IMR-90 (cell line): ENCODE measurements at regions of chr12 and their contacts with region 1.

Region 1: GRCh38 chr12:38316391-38317129 is at the start of gene ALG10B:
- DNase-seq: peak; percentile 96
- ATAC-seq: peak; percentile 100
- H3K4me3 ChIP-seq: peak within 1 kb of the TSS; percentile 77
- H3K27ac ChIP-seq: peak within 1 kb of the TSS; percentile 62
- H3K4me1 ChIP-seq: no peaks in the 10 kb centered on the region
- H3K27me3 ChIP-seq: no peaks in the 10 kb centered on the region
- CTCF ChIP-seq: peak; percentile 76
- POLR2A ChIP-seq: peak; percentile 64; the same call in 1 of the 2 replicates
- RAD21 ChIP-seq: peak; percentile 74
- total RNA-seq, gene ALG10B: 2.5 and 2.9 TPM in 2 replicates

Region 2: GRCh38 chr12:37672655-37673260 is 643.8 kb before region 1 on chr12:
- CTCF ChIA-PET with region 1: no interaction called
- POLR2A ChIA-PET with region 1: no interaction called
- dilution Hi-C with region 1: no loop called
- in situ Hi-C with region 1: no loop called
- intact Hi-C with region 1: loop called (anchors 10 kb)
- DNase-seq: no peak
- ATAC-seq: no peak
- H3K4me3 ChIP-seq: no peak overlapping the region
- H3K27ac ChIP-seq: no peak overlapping the region
- H3K4me1 ChIP-seq: no peaks in the 10 kb centered on the region
- H3K27me3 ChIP-seq: no peaks in the 10 kb centered on the region
- CTCF ChIP-seq: 0 out of 2 replicates have a peak, but pooled peaks have one; percentile 14
- POLR2A ChIP-seq: no peak
- RAD21 ChIP-seq: no peak

Region 3: DNA sequence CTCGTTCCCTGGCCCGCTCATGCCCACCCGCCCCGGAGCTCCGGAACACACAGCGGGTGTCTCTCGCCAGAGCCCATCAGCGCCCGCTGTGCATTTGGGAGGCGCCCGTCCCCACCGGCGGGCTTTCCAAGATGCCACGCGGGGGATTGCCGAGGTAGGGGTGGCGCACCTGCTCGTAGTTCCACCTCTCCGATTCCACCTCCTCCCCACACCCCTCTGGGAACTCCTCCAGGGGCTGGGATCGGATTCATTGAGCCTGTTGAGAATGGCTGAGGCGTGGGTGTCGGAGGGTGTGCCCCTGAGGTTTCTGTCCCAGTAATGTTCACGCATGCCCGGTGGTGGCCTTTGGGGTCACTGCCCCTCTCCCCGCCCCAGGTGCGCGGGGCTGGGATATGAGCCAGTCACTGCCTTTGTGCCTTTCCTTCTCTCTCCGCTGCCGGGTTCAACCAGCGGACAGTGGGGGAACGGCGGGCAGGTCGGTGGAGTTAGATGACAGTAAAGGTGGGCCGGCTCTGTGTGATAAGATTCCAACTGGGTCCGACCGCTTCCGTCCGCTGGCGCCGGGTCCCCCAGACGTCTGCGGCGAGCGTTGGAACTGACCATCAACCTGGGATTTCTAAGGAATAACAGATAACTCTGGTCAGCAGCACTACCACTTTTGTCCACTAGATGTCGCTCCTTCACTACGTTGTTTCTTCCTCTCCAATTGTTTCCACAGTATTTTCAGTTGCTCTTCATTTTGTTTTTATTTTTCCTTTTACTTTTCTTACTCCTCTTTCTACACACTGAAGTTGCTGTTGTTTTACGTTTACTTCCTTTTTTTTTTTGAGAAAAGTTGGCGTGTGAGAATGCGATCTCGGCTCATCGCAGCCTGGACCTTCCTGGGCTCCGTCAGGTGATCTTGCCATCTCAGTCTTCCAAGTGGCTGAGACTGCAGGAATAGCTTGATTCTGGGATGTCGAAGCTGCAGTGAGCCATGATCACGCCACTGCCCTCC is 178.0 kb before region 1 on chr12:
- CTCF ChIA-PET with region 1: no interaction called
- POLR2A ChIA-PET with region 1: no interaction called
- dilution Hi-C with region 1: no loop called
- in situ Hi-C with region 1: loop called (anchors 5 kb)
- intact Hi-C with region 1: loop called (anchors 1 kb)
- DNase-seq: peak; percentile 44
- ATAC-seq: peak; percentile 83
- H3K4me3 ChIP-seq: peak overlapping the region; percentile 24; the same call in 1 of the 2 replicates
- H3K27ac ChIP-seq: no peak overlapping the region
- H3K4me1 ChIP-seq: no peaks in the 10 kb centered on the region
- H3K27me3 ChIP-seq: no peaks in the 10 kb centered on the region
- CTCF ChIP-seq: peak; percentile 85
- POLR2A ChIP-seq: no peak
- RAD21 ChIP-seq: peak; percentile 61

Region 4: GRCh38 chr12:38417101-38417500 is 100.5 kb after region 1 on chr12:
- CTCF ChIA-PET with region 1: no interaction called
- POLR2A ChIA-PET with region 1: no interaction called
- dilution Hi-C with region 1: no loop called
- in situ Hi-C with region 1: no loop called
- intact Hi-C with region 1: no loop called
- DNase-seq: no peak
- ATAC-seq: no peak
- H3K4me3 ChIP-seq: no peak overlapping the region
- H3K27ac ChIP-seq: no peak overlapping the region
- H3K4me1 ChIP-seq: no peaks in the 10 kb centered on the region
- H3K27me3 ChIP-seq: no peaks in the 10 kb centered on the region
- CTCF ChIP-seq: no peak
- POLR2A ChIP-seq: no peak
- RAD21 ChIP-seq: no peak

Region 5: DNA sequence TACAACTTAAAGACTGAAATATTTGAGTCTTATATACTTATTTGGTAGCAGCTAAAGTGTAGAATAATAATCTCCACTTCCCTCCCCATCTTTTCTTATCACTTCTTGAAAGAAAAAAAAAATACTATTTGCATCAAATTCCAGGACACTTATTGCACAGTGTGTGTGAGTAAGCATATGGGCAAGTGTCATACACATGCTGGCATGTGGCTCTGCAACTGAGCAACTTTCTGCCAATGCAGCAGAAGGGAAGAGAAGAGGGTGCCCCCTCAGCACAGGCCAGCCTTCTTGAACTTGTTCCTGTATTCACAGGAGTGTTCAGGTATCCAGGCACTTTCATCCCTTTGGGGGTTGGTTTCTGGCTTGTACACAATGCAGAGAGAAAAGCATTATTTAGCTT is 443.1 kb after region 1 on chr12:
- CTCF ChIA-PET with region 1: no interaction called
- POLR2A ChIA-PET with region 1: no interaction called
- dilution Hi-C with region 1: no loop called
- in situ Hi-C with region 1: no loop called
- intact Hi-C with region 1: no loop called
- DNase-seq: no peak
- ATAC-seq: no peak
- H3K4me3 ChIP-seq: no peak overlapping the region
- H3K27ac ChIP-seq: no peak overlapping the region
- H3K4me1 ChIP-seq: no peaks in the 10 kb centered on the region
- H3K27me3 ChIP-seq: no peaks in the 10 kb centered on the region
- CTCF ChIP-seq: no peak
- POLR2A ChIP-seq: no peak
- RAD21 ChIP-seq: no peak